PC-3 (cell line): ENCODE measurements at regions of chr4 and their contacts with region 1.

Region 1: DNA sequence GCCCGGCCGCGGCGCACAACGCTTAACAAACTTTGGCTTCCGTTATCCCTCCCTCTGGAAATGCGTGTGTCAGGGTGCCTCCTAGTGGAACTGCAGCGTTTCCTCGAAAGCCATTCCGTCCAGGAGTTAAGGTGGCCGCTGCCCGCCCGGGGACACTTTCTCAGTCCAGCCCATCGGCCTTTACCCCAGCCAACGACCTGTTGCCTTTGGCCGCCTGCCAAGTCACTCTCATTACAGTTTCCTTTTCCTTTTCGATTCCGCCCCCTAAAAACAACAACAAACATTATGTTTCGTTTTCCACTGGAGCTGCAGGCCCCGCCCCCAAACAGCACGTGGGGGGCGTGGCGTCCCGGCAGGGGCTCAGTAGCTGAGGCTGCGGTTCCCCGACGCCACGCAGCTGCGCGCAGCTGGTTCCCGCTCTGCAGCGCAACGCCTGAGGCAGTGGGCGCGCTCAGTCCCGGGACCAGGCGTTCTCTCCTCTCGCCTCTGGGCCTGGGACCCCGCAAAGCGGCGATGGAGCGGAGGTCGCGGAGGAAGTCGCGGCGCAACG is at the start of gene HERC5:
- DNase-seq: peak; percentile 85
- ATAC-seq: peak; percentile 93
- H3K4me3 ChIP-seq: peak within 1 kb of the TSS; percentile 69
- H3K27ac ChIP-seq: no peak within 1 kb of the TSS
- H3K4me1 ChIP-seq: no peaks in the 10 kb centered on the region
- H3K27me3 ChIP-seq: no peaks in the 10 kb centered on the region
- CTCF ChIP-seq: peak; percentile 64
- total RNA-seq, gene HERC5: 2.6 and 3.2 TPM in 2 replicates

Region 2: GRCh38 chr4:88356771-88357170 is 100.1 kb before region 1 on chr4:
- CTCF ChIA-PET with region 1: no interaction called
- POLR2A ChIA-PET with region 1: no interaction called
- intact Hi-C with region 1: no loop called
- DNase-seq: no peak
- ATAC-seq: no peak
- H3K4me3 ChIP-seq: no peak overlapping the region
- H3K27ac ChIP-seq: no peak overlapping the region
- H3K4me1 ChIP-seq: 0 out of 2 replicates have a peak, but pooled peaks cover 6% of the 10 kb centered on the region
- H3K27me3 ChIP-seq: no peaks in the 10 kb centered on the region
- CTCF ChIP-seq: no peak

Region 3: GRCh38 chr4:88378691-88379559 is 77.9 kb before region 1 on chr4 and contains the start of gene HERC6:
- CTCF ChIA-PET with region 1: no interaction called
- POLR2A ChIA-PET with region 1: no interaction called
- intact Hi-C with region 1: loop called (anchors 2 kb)
- DNase-seq: peak; percentile 71
- ATAC-seq: peak; percentile 96
- H3K4me3 ChIP-seq: peak within 1 kb of the TSS; percentile 97
- H3K27ac ChIP-seq: peak within 1 kb of the TSS; percentile 58
- H3K4me1 ChIP-seq: no peaks in the 10 kb centered on the region
- H3K27me3 ChIP-seq: no peaks in the 10 kb centered on the region
- CTCF ChIP-seq: peak; percentile 64
- total RNA-seq, gene HERC6: 4.8 and 7.2 TPM in 2 replicates

Region 4: DNA sequence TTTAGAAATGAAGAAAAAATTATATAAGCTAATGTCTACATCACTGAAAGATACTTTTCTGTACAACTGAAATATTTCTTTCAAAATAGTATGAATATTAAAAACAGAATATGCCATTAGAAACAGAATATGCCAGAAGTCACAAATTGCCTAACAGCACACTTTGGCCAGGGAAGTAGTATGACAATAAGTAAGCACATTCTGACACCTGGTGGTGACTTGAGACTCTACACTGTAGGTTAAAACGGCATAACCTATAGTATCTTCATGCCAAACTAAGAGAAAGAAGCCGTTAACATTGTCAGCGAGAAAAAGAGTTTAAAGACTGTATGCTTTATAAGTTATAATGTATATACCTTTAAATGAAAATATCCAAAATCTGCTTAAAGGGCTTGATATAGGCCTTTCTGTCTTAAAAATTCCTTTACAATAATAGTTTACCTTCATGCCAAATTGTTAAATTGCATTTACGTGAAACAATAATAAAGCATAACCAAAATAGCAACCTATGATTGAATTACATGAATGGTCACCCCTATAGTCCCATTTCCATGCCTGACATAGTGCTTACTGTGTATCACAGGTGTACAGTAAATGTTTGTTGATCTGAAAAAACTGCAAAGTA is 567.3 kb after region 1 on chr4:
- CTCF ChIA-PET with region 1: no interaction called
- POLR2A ChIA-PET with region 1: interaction called, 10 read pairs
- intact Hi-C with region 1: no loop called
- DNase-seq: peak; percentile 76
- ATAC-seq: peak; percentile 81
- H3K4me3 ChIP-seq: no peak overlapping the region
- H3K27ac ChIP-seq: no peak overlapping the region
- H3K4me1 ChIP-seq: no peaks in the 10 kb centered on the region
- H3K27me3 ChIP-seq: no peaks in the 10 kb centered on the region
- CTCF ChIP-seq: peak; percentile 82